Activated naive CD4-positive, alpha-beta T cell treated with anti-CD3 and anti-CD28 coated beads for 36 hours (primary cell): ENCODE measurements at regions of chr20 and their contacts with region 1.

Region 1: DNA sequence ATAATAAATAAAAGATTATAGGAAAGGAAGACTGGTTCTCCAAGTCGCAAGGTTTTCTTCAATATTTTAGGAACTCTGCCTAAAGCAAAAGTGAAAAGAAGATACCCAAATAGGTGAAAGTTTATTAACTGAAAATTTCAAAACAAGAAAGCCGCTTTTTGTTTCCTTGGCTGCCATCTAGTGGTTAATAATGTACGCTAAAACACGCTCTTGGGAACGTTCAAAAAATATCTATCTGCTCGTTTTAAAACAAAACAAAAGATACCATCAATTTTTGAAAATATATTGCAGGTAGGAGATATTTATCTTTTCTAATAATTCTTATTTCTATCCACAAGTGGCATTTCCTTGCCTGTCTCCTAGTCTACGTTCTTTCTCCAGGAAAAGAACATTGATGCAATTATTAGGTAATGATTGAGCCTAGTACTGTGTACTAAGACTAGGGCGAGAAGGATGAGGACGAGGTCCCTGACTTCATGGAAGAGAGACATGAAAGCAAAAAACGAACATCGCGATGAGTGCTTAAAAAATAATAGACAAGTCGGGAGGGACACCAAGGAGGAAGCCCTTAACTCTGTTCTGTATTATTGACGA is 97.2 kb downstream of the SPTLC3 start:
- DNase-seq: no peak
- H3K4me3 Mint-ChIP-seq: no peak overlapping the region
- H3K27ac Mint-ChIP-seq: no peak overlapping the region
- H3K4me1 Mint-ChIP-seq: no peaks in the 10 kb centered on the region
- H3K27me3 Mint-ChIP-seq: no peaks in the 10 kb centered on the region

Region 2: DNA sequence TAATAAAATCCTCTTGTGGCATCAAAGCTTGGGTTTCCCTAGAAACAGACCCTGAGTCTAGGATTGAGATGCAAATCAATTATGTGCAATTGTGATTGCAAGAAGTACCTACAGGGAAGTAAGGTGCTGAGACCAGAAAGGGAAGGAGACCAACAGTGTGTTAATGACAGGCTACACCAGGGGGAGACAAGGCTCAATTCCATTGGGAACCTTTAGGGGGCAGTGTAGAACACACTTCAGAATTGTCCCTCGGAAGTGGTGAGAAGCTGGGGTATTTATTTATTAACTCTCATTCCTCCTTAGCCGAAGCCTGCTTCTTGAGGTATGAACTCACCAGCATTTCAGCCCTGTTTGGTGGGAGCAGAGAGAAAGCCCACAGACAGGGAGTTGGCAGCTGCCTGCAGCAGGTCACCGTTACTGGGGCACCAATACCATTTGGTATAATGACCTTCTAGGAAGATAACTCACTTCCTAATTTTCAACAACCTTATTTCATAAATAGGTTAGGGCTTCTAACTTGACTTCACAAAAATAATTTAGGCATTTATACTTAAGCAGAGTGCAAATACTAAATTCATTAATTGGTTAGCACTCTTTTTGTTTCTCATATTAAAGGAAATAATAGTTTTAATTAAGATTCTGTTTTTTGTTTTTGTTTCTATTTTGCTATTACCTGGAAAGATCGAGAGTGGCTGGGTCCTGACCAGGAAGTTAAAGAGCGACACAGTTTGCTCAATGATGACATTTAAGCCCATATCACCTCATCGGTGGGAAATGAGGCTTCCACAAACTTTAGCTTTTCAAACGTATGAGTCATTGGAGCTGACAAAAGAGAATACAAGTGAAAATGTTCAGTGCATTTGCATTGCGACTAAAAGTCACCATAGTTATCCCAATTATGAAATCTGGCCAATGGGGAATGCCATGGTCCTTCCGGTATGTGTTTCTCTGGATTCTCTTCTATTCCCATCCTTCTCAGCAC is 1093.4 kb before region 1 on chr20:
- CTCF ChIA-PET with region 1: no interaction called
- intact Hi-C with region 1: loop called (anchors 5 kb)
- DNase-seq: peak; percentile 39
- H3K4me3 Mint-ChIP-seq: no peak overlapping the region
- H3K27ac Mint-ChIP-seq: no peak overlapping the region
- H3K4me1 Mint-ChIP-seq: peaks cover 2% of the 10 kb centered on the region
- H3K27me3 Mint-ChIP-seq: peaks cover 2% of the 10 kb centered on the region

Region 3: GRCh38 chr20:12838261-12838866 is 267.6 kb before region 1 on chr20:
- CTCF ChIA-PET with region 1: no interaction called
- intact Hi-C with region 1: loop called (anchors 10 kb)
- DNase-seq: no peak
- H3K4me3 Mint-ChIP-seq: no peak overlapping the region
- H3K27ac Mint-ChIP-seq: no peak overlapping the region
- H3K4me1 Mint-ChIP-seq: no peaks in the 10 kb centered on the region
- H3K27me3 Mint-ChIP-seq: peaks cover 6% of the 10 kb centered on the region

Region 4: GRCh38 chr20:12970372-12970821 is 135.6 kb before region 1 on chr20:
- CTCF ChIA-PET with region 1: interaction called, 11 read pairs
- intact Hi-C with region 1: loop called (anchors 1 kb)
- DNase-seq: peak; percentile 36
- H3K4me3 Mint-ChIP-seq: no peak overlapping the region
- H3K27ac Mint-ChIP-seq: no peak overlapping the region
- H3K4me1 Mint-ChIP-seq: peaks cover 10% of the 10 kb centered on the region
- H3K27me3 Mint-ChIP-seq: no peaks in the 10 kb centered on the region